Naive thymus-derived CD4-positive, alpha-beta T cell (primary cell): ENCODE measurements at regions of chr7 and their contacts with region 1.

Region 1: DNA sequence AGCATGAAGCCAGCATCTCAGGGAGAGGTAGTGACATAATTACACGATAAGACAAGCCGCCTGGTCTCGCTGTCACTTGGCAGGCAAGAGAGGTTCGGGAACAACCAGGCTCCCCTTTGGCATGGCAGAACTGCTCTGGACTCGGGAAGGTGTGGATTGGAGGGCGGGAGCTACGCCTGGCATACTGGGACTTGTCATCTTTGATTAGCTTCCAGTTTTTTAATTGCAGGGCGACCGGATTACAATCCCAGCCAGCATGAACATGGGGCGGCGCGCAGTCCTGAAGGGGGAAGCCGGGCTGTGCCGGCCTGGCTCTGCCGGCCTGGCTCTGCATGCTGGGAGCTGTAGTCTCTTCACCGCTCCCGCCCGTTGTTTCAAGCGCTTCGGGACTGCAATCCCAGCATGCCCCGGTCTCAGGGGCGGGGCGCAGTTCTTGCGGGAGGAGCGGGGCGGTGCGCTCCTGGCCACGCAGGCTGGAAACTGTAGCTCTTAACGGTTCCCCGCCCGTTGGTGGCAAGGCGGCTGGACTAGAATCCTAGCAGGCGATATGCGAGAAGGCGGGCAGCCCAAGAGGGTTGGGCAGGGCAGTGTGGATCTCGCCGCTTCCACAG is 45.5 kb upstream of the ZNF716 start:
- DNase-seq: no peak
- ATAC-seq: no peak
- H3K4me3 ChIP-seq: no peak overlapping the region
- H3K4me3 Mint-ChIP-seq: no peak overlapping the region
- H3K27ac ChIP-seq: no peak overlapping the region
- H3K27ac Mint-ChIP-seq: no peak overlapping the region
- H3K4me1 ChIP-seq: no peaks in the 10 kb centered on the region
- H3K4me1 Mint-ChIP-seq: no peaks in the 10 kb centered on the region
- H3K27me3 ChIP-seq: no peaks in the 10 kb centered on the region
- H3K27me3 Mint-ChIP-seq: no peaks in the 10 kb centered on the region

Region 2: GRCh38 chr7:57354679-57355338 is 49.6 kb before region 1 on chr7:
- CTCF ChIA-PET with region 1: no interaction called
- POLR2A ChIA-PET with region 1: no interaction called
- intact Hi-C with region 1: no loop called
- DNase-seq: no peak
- ATAC-seq: no peak
- H3K4me3 ChIP-seq: no peak overlapping the region
- H3K4me3 Mint-ChIP-seq: no peak overlapping the region
- H3K27ac ChIP-seq: no peak overlapping the region
- H3K27ac Mint-ChIP-seq: no peak overlapping the region
- H3K4me1 ChIP-seq: no peaks in the 10 kb centered on the region
- H3K4me1 Mint-ChIP-seq: no peaks in the 10 kb centered on the region
- H3K27me3 ChIP-seq: no peaks in the 10 kb centered on the region
- H3K27me3 Mint-ChIP-seq: no peaks in the 10 kb centered on the region

Region 3: GRCh38 chr7:57417731-57418130 is 13.3 kb after region 1 on chr7:
- CTCF ChIA-PET with region 1: no interaction called
- POLR2A ChIA-PET with region 1: no interaction called
- intact Hi-C with region 1: loop called (anchors 1 kb)
- DNase-seq: no peak
- ATAC-seq: no peak
- H3K4me3 ChIP-seq: no peak overlapping the region
- H3K4me3 Mint-ChIP-seq: no peak overlapping the region
- H3K27ac ChIP-seq: no peak overlapping the region
- H3K27ac Mint-ChIP-seq: no peak overlapping the region
- H3K4me1 ChIP-seq: no peaks in the 10 kb centered on the region
- H3K4me1 Mint-ChIP-seq: no peaks in the 10 kb centered on the region
- H3K27me3 ChIP-seq: no peaks in the 10 kb centered on the region
- H3K27me3 Mint-ChIP-seq: no peaks in the 10 kb centered on the region